ENCODE measurements at regions of chr19 and their contacts with region 1.

Region 1: GRCh38 chr19:49363268-49364082 is at the start of gene DKKL1:
- DNase-seq: peak; percentile 60 to 74 (median 62)
- H3K4me3 ChIP-seq: peak within 1 kb of the TSS; percentile 30 to 47
- H3K4me3 Mint-ChIP-seq: peak within 1 kb of the TSS in 1 of 8 donors; percentile 50
- H3K27ac ChIP-seq: no peak within 1 kb of the TSS
- H3K27ac Mint-ChIP-seq: no peak within 1 kb of the TSS
- H3K4me1 ChIP-seq: peaks cover 29% of the 10 kb centered on the region
- H3K4me1 Mint-ChIP-seq: peaks cover 4 to 10% (median 8%) of the 10 kb centered on the region in 4 donors
- H3K27me3 ChIP-seq: peaks cover 19% of the 10 kb centered on the region
- H3K27me3 Mint-ChIP-seq: peaks cover 12 to 13% of the 10 kb centered on the region in 2 donors
- total RNA-seq, gene DKKL1: not detected

Region 2: DNA sequence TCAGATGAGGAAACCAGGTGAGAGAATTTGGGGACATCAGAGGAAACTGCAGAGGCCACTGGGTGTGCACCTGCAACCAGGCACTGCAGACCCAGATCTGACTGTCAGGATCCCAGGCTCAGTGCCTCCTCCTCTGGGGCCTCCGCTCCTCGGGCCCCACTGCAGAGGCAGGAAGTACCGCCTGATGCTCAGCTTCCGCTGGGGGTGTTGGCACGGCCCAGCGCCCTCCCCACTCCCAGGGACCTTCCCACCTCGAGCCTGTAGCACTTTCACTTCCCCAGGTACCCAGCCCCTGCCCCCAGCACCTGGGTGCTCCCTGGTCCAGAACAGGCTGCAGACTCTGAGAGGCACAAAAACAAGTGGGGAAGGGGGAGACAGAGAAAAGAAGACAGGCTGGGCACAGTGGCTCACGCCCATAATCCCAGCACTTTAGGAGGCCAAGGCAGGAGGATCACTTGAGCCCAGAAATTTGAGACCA is 29.6 kb before region 1 on chr19:
- CTCF ChIA-PET with region 1: no interaction called
- POLR2A ChIA-PET with region 1: interaction called, 3 read pairs
- intact Hi-C with region 1: loop called (anchors 2 kb)
- DNase-seq: peak; percentile 59 to 85 (median 72)
- H3K4me3 ChIP-seq: peak overlapping the region in 1 of 2 donors; percentile 49
- H3K4me3 Mint-ChIP-seq: peak overlapping the region; percentile 85 to 99 (median 87)
- H3K27ac ChIP-seq: peak overlapping the region; percentile 86
- H3K27ac Mint-ChIP-seq: peak overlapping the region; percentile 93 to 98 (median 95)
- H3K4me1 ChIP-seq: peaks cover 83% of the 10 kb centered on the region
- H3K4me1 Mint-ChIP-seq: peaks cover 49 to 88% (median 66%) of the 10 kb centered on the region in 4 donors
- H3K27me3 ChIP-seq: no peaks in the 10 kb centered on the region
- H3K27me3 Mint-ChIP-seq: no peaks in the 10 kb centered on the region

Region 3: DNA sequence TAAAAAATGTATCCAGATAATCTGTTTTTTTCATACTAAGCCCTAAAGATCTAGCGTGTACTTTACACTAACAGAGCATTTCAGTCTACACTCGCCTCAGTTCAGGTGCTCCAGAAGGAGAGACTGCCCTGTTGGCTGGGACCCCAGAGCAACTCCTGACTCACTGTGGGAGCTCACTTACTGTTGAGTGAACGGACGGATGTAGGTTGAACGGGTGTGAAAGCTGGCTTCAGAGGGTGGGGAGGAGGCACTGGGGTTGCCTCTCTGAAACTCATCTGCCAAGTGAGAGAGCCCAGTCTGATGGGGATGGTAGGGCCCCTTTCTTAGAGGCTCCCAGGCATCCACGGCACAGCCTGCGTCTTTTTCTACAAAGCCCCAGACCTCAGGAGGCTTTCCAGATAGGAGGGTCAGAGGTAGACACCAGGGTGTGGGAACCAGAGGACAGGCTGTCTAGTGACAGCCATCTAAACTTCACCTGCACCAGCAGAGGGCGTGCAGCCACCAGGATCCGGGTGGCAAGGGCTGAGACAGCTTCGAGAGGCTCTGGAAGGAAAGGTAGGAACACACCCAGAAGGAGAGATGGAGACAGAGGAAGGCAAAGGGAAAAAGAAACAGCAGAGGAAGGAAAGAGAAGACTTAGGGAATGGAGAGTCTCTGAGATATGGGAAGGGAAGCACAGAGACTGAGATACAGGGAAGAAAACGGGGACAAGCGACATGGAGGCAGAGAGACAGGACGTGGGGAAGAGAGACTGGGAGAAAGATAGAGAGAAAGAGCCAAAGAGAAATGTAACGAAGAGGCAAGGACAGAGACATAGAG is 28.3 kb after region 1 on chr19:
- CTCF ChIA-PET with region 1: no interaction called
- POLR2A ChIA-PET with region 1: no interaction called
- intact Hi-C with region 1: loop called (anchors 2 kb)
- DNase-seq: peak; percentile 76 to 80 (median 78)
- H3K4me3 ChIP-seq: no peak overlapping the region
- H3K4me3 Mint-ChIP-seq: no peak overlapping the region
- H3K27ac ChIP-seq: no peak overlapping the region
- H3K27ac Mint-ChIP-seq: peak overlapping the region in 6 of 7 donors; percentile 9 to 85 (median 60)
- H3K4me1 ChIP-seq: peaks cover 21% of the 10 kb centered on the region
- H3K4me1 Mint-ChIP-seq: peaks cover 8 to 24% (median 11%) of the 10 kb centered on the region in 4 donors
- H3K27me3 ChIP-seq: no peaks in the 10 kb centered on the region
- H3K27me3 Mint-ChIP-seq: no peaks in the 10 kb centered on the region

Measured in CD4-positive, alpha-beta memory T cell (primary cell).